CD4-positive, alpha-beta T cell (primary cell): ENCODE measurements at regions of chr6 and their contacts with region 1.

Region 1: DNA sequence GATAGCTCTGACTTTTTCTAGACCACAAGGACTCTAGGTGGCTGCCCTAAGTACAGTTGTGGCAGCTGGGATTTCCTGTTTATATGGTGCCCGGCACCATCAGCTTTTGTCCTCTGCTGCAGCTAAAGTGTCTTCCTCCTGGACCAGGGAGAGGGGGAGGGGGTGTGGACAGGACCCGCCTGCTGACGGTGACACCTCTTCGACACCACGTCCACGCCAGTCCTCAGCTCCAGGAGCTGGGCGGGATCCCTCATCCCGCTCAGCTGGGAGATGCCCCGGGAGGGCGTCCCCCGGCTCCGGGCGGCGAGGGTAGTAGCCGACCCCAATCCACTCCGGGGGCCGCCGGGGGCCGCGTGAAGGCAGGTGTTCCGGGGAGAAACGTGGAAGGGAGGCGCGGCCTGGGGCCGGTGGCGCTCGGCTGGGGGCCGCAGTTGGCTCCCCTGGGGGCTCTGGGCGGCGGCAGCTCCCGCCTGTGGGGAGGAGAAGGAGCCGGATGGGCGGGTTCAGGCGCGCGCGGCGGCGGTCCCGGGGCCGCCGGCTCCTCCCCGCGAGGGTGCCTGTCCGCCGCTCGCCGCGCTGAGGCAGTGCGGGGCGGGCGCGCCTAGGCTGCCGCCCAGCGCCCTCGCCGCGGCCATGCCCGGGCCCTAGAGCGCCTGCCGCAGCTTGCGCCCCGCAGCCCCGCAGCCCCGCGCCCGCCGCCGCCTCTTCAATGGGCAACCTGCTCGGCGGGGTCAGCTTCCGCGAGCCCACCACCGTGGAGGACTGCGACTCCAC is at the start of gene OGFRL1:
- DNase-seq: peak; percentile 35 to 88 (median 60)
- ATAC-seq: peak; percentile 89
- H3K4me3 ChIP-seq: peak within 1 kb of the TSS; percentile 79
- H3K4me3 Mint-ChIP-seq: peak within 1 kb of the TSS; percentile 92
- H3K27ac ChIP-seq: peak within 1 kb of the TSS; percentile 61 to 76
- H3K27ac Mint-ChIP-seq: peak within 1 kb of the TSS; percentile 77
- H3K4me1 ChIP-seq: peaks cover 28% of the 10 kb centered on the region
- H3K4me1 Mint-ChIP-seq: peaks cover 42% of the 10 kb centered on the region
- H3K27me3 ChIP-seq: no peaks in the 10 kb centered on the region
- H3K27me3 Mint-ChIP-seq: no peaks in the 10 kb centered on the region
- CTCF ChIP-seq: no peak
- total RNA-seq, gene OGFRL1: 9.1 TPM

Region 2: GRCh38 chr6:71228461-71229041 is 59.9 kb before region 1 on chr6:
- CTCF ChIA-PET with region 1: no interaction called
- POLR2A ChIA-PET with region 1: interaction called, 17 read pairs
- intact Hi-C with region 1: no loop called
- DNase-seq: peak in 3 of 14 experiments; percentile 41 to 59 (median 55)
- ATAC-seq: peak; percentile 81
- H3K4me3 ChIP-seq: no peak overlapping the region
- H3K4me3 Mint-ChIP-seq: peak overlapping the region; percentile 26
- H3K27ac ChIP-seq: peak overlapping the region in 1 of 2 donors; percentile 42
- H3K27ac Mint-ChIP-seq: peak overlapping the region; percentile 59
- H3K4me1 ChIP-seq: peaks cover 5% of the 10 kb centered on the region
- H3K4me1 Mint-ChIP-seq: peaks cover 37% of the 10 kb centered on the region
- H3K27me3 ChIP-seq: no peaks in the 10 kb centered on the region
- H3K27me3 Mint-ChIP-seq: no peaks in the 10 kb centered on the region
- CTCF ChIP-seq: no peak